ENCODE measurements at regions of chr12 and their contacts with region 1.

Region 1: GRCh38 chr12:15662303-15662980 is 126.7 kb downstream of the EPS8 start:
- DNase-seq: no peak
- ATAC-seq: no peak
- H3K4me3 ChIP-seq: no peak overlapping the region
- H3K4me3 Mint-ChIP-seq: no peak overlapping the region
- H3K27ac ChIP-seq: no peak overlapping the region
- H3K27ac Mint-ChIP-seq: no peak overlapping the region
- H3K4me1 ChIP-seq: no peaks in the 10 kb centered on the region
- H3K4me1 Mint-ChIP-seq: no peaks in the 10 kb centered on the region
- H3K27me3 ChIP-seq: no peaks in the 10 kb centered on the region
- H3K27me3 Mint-ChIP-seq: no peaks in the 10 kb centered on the region

Region 2: DNA sequence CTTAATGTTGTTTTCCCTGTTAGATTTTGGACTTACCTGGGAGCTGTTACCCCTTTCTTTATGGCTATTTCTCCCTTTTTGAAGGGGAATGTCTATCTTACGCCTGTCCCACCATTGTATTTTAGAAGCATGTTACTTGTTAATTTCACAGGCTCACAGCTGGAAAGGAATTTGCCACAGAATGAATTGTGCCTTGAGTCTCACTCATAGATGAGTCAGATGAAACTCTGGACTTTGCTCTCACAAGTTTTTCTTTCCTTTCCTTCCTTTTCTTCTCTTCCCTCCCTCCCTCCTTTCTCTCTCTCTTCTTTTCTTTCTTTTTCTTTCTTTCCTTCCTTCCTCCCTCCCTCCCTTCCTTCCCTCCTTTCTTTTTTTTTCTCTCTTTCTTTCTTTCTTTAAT is 1306.3 kb before region 1 on chr12:
- CTCF ChIA-PET with region 1: interaction called in 1 of 2 experiments, 11 read pairs
- POLR2A ChIA-PET with region 1: no interaction called
- DNase-seq: no peak
- ATAC-seq: no peak
- H3K4me3 ChIP-seq: no peak overlapping the region
- H3K4me3 Mint-ChIP-seq: no peak overlapping the region
- H3K27ac ChIP-seq: no peak overlapping the region
- H3K27ac Mint-ChIP-seq: no peak overlapping the region
- H3K4me1 ChIP-seq: no peaks in the 10 kb centered on the region
- H3K4me1 Mint-ChIP-seq: peaks cover 0 to under 1% (median 0%) of the 10 kb centered on the region in 3 donors
- H3K27me3 ChIP-seq: no peaks in the 10 kb centered on the region
- H3K27me3 Mint-ChIP-seq: no peaks in the 10 kb centered on the region

Measured in T-cell (primary cell).